ENCODE measurements at regions of chr16 and their contacts with region 1.

Region 1: DNA sequence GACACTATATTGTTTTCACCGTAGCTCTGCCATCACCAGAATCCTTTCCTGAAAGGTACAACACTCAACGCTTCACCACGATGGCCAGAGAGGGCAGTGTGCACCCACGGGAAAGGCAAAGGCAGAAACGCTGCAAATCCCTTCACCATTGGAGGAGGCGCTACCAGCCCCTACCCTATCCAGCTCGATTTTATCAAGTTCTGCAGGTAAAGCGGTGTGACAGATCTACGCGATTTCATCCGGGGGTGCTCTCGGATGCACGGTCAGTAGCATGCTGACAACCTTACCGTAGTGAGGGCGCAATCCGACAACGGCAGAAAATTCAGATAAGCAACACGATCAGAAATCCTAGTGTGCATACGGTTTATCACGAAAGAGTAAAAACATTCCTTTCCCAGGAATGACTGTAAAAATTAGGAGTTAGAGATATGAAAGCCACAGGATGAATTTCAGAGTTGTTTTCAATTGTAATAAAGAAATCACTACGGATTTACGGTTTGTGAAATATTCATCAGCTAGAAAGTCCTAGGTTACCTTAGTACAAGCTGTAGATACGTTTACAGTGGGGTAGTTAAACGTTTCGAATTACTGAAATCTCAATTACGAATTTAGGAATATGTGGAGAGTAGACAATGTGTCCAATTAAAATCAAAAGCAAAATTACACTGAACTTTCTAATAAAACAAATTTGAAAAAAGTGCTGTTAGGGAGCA is 1.8 kb downstream of the NETO2 start:
- DNase-seq: peak; percentile 93
- H3K4me3 Mint-ChIP-seq: peak overlapping the region; percentile 94
- H3K27ac Mint-ChIP-seq: peak overlapping the region; percentile 81
- H3K4me1 Mint-ChIP-seq: peaks cover 44% of the 10 kb centered on the region
- H3K27me3 Mint-ChIP-seq: no peaks in the 10 kb centered on the region
- CTCF ChIP-seq: peak; percentile 82

Region 2: DNA sequence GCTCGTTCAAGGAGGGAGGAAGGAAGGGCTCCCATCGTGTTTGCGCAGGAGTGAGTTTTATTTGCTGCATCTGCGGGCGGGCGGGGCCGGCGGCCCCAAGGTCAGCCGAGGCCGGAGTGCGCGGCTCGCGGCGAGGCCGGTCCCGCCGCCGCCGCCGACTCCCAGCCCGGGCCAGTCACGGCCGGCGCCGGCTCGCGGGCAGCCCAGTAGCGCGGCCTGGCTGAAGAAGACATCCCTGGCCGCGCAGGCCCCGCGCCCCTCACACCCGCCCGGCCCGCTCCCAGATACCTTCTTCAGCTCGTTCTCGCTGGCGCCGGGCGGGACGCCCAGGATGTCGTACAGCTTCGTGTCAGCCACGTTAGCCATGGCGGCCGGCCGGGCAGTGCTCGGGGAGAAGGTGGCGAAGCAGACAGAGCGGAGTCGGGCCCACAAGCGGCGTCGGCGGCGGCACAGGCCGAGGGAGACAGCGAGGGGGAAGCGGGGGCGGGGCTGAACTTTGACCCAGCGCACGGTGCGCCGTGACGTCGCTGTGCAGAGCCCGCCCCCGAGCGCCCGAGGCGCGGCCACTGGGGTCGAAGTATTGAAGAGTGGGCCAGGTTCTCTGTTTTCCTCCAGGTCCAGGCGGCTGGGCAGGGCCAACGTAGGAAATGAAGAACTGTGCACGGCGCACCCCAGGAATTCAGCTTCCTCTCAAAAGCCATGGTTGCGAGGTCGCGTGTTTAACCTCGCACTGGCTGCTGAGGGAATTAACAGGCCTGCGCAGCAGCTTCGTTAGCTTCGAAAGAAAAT is 168.5 kb before region 1 on chr16 and contains the start of gene DNAJA2:
- CTCF ChIA-PET with region 1: no interaction called
- intact Hi-C with region 1: no loop called
- DNase-seq: peak; percentile 97
- H3K4me3 Mint-ChIP-seq: peak within 1 kb of the TSS; percentile 74
- H3K27ac Mint-ChIP-seq: peak within 1 kb of the TSS; percentile 93
- H3K4me1 Mint-ChIP-seq: peaks cover 50% of the 10 kb centered on the region
- H3K27me3 Mint-ChIP-seq: no peaks in the 10 kb centered on the region
- CTCF ChIP-seq: no peak
- total RNA-seq, gene DNAJA2: 76.8 and 80.1 TPM in 2 replicates

Region 3: GRCh38 chr16:47037746-47038458 is 104.0 kb before region 1 on chr16:
- CTCF ChIA-PET with region 1: interaction called, 12 read pairs
- intact Hi-C with region 1: loop called (anchors 5 kb)
- DNase-seq: peak; percentile 97
- H3K4me3 Mint-ChIP-seq: peak overlapping the region; percentile 76
- H3K27ac Mint-ChIP-seq: no peak overlapping the region
- H3K4me1 Mint-ChIP-seq: no peaks in the 10 kb centered on the region
- H3K27me3 Mint-ChIP-seq: peaks cover 25% of the 10 kb centered on the region
- CTCF ChIP-seq: peak; percentile 94

Region 4: GRCh38 chr16:47713225-47713595 is 571.3 kb after region 1 on chr16:
- CTCF ChIA-PET with region 1: no interaction called
- intact Hi-C with region 1: loop called (anchors 10 kb)
- DNase-seq: no peak
- H3K4me3 Mint-ChIP-seq: no peak overlapping the region
- H3K27ac Mint-ChIP-seq: no peak overlapping the region
- H3K4me1 Mint-ChIP-seq: no peaks in the 10 kb centered on the region
- H3K27me3 Mint-ChIP-seq: peaks cover 13% of the 10 kb centered on the region
- CTCF ChIP-seq: no peak

Region 5: DNA sequence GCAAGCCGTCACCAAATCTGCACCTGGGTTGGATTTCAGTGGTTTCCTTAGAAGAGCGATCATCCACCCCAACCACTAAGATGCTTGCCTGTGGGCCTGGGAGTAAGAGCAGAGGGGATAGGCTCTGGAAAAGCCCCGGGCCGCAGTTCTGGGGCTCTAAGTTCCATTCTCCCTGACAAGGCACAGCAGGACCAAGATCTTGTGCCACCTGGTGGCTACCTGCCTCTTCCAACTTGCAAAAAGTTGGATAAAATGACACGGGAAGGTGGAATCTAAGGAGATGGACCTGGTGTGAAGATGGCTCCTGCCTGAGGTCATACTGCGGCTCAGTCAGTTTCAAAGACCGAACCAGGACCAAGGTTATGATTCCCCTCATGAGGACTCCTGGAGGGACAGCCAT is 971.5 kb after region 1 on chr16:
- CTCF ChIA-PET with region 1: no interaction called
- intact Hi-C with region 1: loop called (anchors 5 kb)
- DNase-seq: peak; percentile 18
- H3K4me3 Mint-ChIP-seq: no peak overlapping the region
- H3K27ac Mint-ChIP-seq: no peak overlapping the region
- H3K4me1 Mint-ChIP-seq: no peaks in the 10 kb centered on the region
- H3K27me3 Mint-ChIP-seq: peaks cover 85% of the 10 kb centered on the region
- CTCF ChIP-seq: no peak

Region 6: GRCh38 chr16:48164907-48165726 is 1023.2 kb after region 1 on chr16:
- CTCF ChIA-PET with region 1: interaction called, 17 read pairs
- intact Hi-C with region 1: no loop called
- DNase-seq: peak; percentile 88
- H3K4me3 Mint-ChIP-seq: peak overlapping the region; percentile 8
- H3K27ac Mint-ChIP-seq: peak overlapping the region; percentile 55
- H3K4me1 Mint-ChIP-seq: peaks cover 14% of the 10 kb centered on the region
- H3K27me3 Mint-ChIP-seq: no peaks in the 10 kb centered on the region
- CTCF ChIP-seq: peak; percentile 93

Measured in Calu3 (cell line).